Activated CD4-positive, alpha-beta T cell treated with anti-CD3 and anti-CD28 coated beads, Interleukin-2, amount 10 ng/mL, durations not matched to agents 24 days and 14 days (primary cell): ENCODE measurements at regions of chr2 and their contacts with region 1.

Region 1: DNA sequence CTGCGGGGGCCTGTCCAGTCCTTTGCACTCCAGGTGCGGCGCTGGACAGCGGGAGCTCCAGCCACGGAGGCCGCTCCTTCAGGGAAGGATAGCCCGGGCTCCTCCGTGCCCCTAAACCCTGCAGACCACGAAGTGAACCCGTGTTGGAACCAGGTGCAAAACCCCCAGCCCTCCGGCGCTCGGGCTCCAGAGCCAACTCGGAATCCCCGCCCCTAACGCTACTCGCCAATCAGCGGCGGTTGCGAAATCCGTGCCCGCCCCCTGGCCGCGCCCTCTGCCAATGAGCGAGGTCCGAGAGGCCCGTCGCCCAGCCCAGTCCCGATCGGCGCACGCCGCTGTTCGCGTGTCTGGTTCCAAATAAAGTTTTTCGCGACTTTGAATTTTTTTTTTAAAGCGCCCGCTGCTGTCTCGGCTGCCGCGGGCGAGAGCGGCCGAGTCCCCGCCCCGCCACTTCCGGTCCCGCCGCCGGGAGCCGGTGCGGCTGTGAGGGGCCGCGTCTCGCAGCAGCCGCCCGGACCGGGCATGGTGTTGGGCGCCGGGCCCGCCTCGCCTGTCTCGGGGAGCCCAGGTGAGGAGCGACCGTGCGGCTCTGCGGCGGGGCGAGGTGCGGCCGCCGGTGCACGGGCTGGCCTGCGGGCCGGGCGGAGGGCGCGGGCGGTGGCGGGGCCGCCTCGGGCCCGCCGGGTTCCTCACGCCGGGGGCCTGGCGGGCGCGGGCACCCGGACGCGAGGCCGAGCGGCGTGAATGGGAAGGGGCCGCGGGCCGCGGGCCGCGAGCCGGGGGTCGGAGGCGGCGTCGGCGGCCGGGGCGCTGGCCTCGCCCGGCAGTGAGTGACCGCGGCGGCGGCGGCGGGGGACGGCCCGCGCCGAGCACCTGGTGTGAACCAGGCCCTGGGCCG is at the start of gene UBE2F:
- DNase-seq: peak; percentile 100
- H3K4me3 Mint-ChIP-seq: peak within 1 kb of the TSS; percentile 94
- H3K27ac Mint-ChIP-seq: peak within 1 kb of the TSS; percentile 92
- H3K4me1 Mint-ChIP-seq: peaks cover 33% of the 10 kb centered on the region
- H3K27me3 Mint-ChIP-seq: no peaks in the 10 kb centered on the region
- total RNA-seq, gene UBE2F: 115 and 124 TPM in 2 replicates

Region 2: GRCh38 chr2:237898057-237898414 is 68.8 kb before region 1 on chr2:
- intact Hi-C with region 1: loop called (anchors 2 kb)
- DNase-seq: no peak
- H3K4me3 Mint-ChIP-seq: peak overlapping the region; percentile 63
- H3K27ac Mint-ChIP-seq: peak overlapping the region; percentile 90
- H3K4me1 Mint-ChIP-seq: peaks cover 47% of the 10 kb centered on the region
- H3K27me3 Mint-ChIP-seq: no peaks in the 10 kb centered on the region

Region 3: DNA sequence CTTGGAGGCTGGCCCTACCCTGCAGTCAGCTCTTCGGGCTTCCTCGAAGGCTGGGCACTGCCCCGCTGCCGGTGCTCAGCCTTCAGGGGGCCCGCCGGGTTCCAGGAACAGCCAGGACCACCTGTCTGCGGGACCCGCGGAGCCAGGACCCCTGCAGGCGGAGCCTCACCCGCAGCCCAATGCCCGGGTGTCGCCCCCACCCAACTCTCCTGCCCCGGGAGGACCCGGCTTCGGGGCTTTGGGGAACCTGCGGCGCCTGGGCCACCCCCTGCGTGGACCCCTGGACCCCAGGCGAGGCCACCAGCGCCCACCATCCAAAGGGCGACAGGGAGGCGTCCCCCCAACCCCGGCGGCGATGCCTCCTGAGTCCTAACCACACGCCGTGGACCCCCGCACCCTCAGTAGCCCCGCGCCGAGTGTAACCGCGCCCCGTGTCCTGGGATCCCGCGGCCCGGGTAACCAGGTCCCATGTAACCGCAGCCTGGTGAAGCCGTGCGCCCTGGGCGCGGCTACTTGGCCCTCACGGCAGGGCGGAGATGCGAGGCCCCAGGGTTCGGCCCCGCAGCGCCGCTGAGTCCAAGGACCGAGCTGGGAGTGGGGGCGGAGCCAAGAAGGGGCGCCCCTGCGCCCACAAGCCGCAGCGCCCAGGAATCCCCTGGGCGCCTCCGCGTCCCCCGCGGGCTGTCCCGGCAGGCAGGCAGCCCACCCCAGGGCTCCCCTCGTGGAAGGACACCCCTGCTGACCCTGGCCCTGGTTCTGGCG is 11.0 kb before region 1 on chr2:
- intact Hi-C with region 1: no loop called
- DNase-seq: peak; percentile 66
- H3K4me3 Mint-ChIP-seq: no peak overlapping the region
- H3K27ac Mint-ChIP-seq: no peak overlapping the region
- H3K4me1 Mint-ChIP-seq: peaks cover 3% of the 10 kb centered on the region
- H3K27me3 Mint-ChIP-seq: peaks cover 31% of the 10 kb centered on the region

Region 4: DNA sequence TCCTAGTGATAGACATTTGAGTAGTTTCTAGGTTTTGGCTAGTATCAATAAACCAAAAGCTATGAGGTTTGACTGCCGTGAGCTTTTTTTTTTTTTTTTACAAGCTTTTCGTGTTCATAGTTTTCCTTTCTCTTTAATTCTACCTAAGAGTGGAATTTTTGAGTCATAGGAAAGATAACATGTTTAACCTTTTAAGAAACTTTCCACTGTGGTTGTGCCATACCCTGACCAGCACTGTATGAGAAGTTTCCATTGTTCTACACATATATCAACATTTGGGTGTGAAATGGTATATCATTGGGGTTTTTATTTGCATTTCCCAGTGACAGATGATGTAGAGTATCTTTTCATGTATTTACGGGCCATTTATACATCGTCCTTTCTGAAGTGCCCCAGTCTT is 31.7 kb after region 1 on chr2:
- intact Hi-C with region 1: loop called (anchors 2 kb)
- DNase-seq: peak; percentile 80
- H3K4me3 Mint-ChIP-seq: peak overlapping the region; percentile 69
- H3K27ac Mint-ChIP-seq: peak overlapping the region; percentile 97
- H3K4me1 Mint-ChIP-seq: peaks cover 44% of the 10 kb centered on the region
- H3K27me3 Mint-ChIP-seq: peaks cover 2% of the 10 kb centered on the region

Region 5: DNA sequence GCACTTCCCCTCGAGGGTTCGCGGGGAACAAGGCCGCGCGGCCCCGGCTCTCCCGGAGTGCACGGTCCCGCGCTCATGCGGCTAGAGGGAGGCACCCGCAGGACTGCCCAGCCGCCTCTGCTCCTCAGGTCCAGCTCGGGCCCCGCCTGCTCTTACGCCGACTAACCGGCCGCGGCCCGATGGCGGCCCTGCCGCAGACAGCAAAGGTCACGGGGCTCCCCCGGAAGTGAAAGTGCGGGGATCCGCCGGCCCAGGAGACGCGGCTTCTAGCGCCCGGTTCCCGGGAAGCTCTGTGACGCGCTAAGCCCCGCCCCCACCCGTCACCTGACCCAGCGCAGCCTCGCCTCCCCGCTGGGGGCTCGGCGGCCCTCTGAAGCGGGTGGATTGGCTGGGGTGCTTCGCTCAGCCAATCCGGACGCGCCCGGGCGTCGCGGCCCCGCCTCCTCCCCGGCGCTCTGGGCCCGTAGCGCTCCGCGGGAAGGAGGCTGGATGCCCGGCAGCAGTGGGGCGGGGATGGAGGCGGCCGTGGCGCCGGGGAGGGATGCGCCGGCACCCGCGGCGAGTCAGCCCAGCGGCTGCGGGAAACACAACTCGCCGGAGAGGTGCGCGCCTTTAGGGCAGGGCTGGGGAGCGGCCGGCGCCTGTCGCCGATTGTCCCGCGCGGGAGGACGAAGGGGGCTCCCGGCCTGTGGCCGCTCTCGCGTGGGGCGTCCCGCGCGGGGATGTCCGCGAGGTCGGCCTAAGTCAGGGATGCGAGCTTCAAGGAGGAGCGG is 93.9 kb after region 1 on chr2 and contains the start of gene SCLY:
- intact Hi-C with region 1: loop called (anchors 1 kb)
- DNase-seq: peak; percentile 98
- H3K4me3 Mint-ChIP-seq: peak within 1 kb of the TSS; percentile 91
- H3K27ac Mint-ChIP-seq: peak within 1 kb of the TSS; percentile 95
- H3K4me1 Mint-ChIP-seq: peaks cover 44% of the 10 kb centered on the region
- H3K27me3 Mint-ChIP-seq: peaks cover 6% of the 10 kb centered on the region
- total RNA-seq, gene SCLY: 109 TPM in 2 replicates

Region 6: DNA sequence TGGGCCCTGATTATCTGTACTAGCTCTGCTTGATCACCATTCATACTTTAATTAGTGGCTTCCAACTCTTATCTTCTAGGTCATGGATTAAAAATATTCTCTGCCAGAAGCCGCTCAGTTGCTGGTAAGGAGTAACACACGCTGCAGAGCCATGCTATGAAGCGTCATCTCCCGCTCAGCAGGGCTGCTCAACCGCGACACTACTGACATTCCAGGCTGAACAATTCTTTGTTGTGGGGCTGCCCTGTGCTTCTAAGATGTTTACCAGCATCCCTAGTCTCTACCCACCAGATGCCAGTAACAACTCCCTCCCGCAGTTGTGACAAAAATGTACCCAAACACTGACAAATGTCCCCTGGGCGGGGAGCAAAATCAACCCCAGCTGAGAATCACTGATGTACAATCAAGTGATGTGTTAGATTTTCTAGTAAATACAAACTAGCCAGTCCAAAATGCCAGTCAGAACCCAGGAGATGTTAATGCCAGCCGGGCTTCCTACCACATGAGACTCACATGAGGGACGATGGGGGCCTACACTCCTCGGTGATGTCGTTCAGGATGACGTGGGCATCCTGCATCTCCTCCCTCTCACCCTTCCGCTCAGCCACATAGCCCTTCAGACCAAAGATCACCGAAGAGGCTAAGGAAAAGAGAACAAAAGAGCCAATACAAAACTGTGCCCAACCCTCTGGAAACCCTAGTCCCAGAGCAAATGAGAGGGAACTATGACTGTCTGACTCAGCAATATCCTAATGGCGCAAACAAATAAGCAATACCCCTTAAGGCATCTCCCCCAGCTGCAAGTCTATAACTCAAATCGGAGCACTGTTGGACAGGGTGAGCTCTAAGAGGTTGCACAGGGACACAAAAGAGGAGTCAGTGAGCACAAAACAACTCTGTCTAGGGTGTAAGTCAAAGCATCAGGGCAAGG is 221.1 kb after region 1 on chr2:
- intact Hi-C with region 1: no loop called
- DNase-seq: no peak
- H3K4me3 Mint-ChIP-seq: no peak overlapping the region
- H3K27ac Mint-ChIP-seq: no peak overlapping the region
- H3K4me1 Mint-ChIP-seq: peaks cover 8% of the 10 kb centered on the region
- H3K27me3 Mint-ChIP-seq: no peaks in the 10 kb centered on the region

Region 7: GRCh38 chr2:238239872-238240751 is 273.3 kb after region 1 on chr2 and contains the start of gene HES6:
- intact Hi-C with region 1: loop called (anchors 2 kb)
- DNase-seq: peak; percentile 95
- H3K4me3 Mint-ChIP-seq: peak within 1 kb of the TSS; percentile 83
- H3K27ac Mint-ChIP-seq: peak within 1 kb of the TSS; percentile 51
- H3K4me1 Mint-ChIP-seq: peaks cover 6% of the 10 kb centered on the region
- H3K27me3 Mint-ChIP-seq: peaks cover 46% of the 10 kb centered on the region
- total RNA-seq, gene HES6: 10.2 and 10.3 TPM in 2 replicates

Region 8: DNA sequence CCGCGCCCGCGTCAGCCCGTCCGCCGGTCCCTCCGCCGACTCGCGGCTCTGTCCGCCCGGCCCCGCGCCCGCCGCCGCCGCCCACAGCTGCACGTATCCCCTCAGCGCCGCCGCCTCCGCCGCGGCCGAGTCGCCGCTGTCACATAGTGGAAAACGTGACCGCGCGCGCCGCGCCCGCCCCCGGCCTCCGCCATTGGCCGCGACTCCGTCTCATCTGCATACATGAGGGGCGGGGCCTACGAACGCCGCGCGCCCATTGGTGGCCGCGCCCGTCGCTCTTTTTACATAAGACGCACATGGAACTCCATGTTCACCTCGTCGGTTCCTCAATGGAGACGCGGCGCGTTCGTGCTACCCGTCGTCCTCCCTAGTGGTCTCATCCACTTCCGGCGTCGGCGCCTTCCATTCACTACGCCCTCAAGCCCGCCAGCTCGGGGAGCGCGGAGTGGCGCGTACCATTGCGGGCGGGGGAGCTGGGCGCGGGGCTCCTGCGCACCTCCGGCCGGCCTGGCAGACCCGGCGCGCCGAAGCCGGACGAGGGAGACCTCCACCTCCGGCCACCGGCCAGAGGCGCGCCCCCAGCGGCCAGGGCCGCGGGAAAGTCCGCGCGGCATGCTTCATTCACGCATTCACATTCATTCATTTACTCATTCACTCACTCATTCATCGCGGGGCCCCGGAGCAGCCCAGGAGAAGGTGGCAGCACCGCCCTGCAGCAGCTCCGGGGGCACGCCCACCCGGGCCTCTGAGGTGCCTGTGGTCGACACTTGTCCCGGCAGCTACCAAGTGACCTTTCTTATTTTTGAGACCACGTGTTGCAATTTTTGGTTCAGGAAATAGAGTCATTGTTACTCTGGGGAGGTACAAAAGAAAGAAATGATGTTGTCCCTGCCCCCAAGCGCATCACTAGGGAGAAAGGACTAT is 322.1 kb after region 1 on chr2:
- intact Hi-C with region 1: loop called (anchors 1 kb)
- DNase-seq: peak; percentile 99
- H3K4me3 Mint-ChIP-seq: peak overlapping the region; percentile 93
- H3K27ac Mint-ChIP-seq: peak overlapping the region; percentile 99
- H3K4me1 Mint-ChIP-seq: peaks cover 25% of the 10 kb centered on the region
- H3K27me3 Mint-ChIP-seq: no peaks in the 10 kb centered on the region